ENCODE measurements at regions of chr10 and their contacts with region 1.

Region 1: DNA sequence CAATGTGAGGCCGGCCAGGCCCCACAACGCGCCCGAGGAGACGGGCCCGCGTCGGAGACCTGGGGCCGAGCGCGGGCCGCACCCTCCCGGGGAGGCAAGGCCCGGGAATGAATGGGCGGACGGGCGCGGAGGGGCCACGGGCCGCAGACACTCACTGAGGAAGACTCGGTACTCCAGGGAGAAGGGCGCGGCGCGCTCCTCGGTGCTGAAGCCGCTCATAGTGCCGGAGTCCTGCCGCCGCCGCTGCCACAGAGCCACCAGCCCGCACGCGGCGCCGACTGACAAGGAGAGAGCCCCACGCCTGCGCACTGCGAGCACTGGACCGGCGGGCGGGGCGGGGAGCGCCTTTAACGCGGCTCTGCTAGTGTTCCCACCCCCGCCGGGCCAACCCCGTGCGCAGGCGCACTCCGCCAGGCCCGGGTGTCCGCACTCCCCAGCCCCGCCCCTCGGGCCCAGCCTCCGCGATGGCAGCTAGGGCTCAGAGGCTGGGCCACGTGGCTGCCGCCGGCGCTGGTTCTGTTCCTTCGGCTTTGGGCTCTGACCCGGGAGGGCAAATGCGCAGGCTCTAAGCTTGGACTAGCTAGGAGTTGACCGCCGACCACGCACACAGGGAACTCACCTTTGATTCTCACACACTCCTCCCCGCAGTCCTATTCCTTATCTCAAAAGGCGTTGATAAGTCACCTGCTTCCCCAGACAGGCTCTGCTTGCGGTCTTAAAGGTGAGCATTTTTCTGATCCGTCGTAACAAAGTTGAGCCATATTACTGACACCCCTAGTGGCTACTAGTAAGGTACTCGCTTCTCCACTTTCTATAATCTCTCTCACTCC is at the start of gene PPA1:
- DNase-seq: peak; percentile 98 to 100 (median 99)
- ATAC-seq: peak; percentile 99
- H3K4me3 ChIP-seq: peak within 1 kb of the TSS; percentile 88
- H3K4me3 Mint-ChIP-seq: peak within 1 kb of the TSS; percentile 74 to 94 (median 87)
- H3K27ac ChIP-seq: peak within 1 kb of the TSS; percentile 84
- H3K27ac Mint-ChIP-seq: peak within 1 kb of the TSS; percentile 79 to 99 (median 92)
- H3K4me1 ChIP-seq: peaks cover 4 to 5% of the 10 kb centered on the region in 2 donors
- H3K4me1 Mint-ChIP-seq: peaks cover 9 to 47% (median 35%) of the 10 kb centered on the region in 7 donors
- H3K27me3 ChIP-seq: no peaks in the 10 kb centered on the region
- H3K27me3 Mint-ChIP-seq: no peaks in the 10 kb centered on the region
- total RNA-seq, gene PPA1: 51.9 to 175 (median 69.6) TPM

Region 2: DNA sequence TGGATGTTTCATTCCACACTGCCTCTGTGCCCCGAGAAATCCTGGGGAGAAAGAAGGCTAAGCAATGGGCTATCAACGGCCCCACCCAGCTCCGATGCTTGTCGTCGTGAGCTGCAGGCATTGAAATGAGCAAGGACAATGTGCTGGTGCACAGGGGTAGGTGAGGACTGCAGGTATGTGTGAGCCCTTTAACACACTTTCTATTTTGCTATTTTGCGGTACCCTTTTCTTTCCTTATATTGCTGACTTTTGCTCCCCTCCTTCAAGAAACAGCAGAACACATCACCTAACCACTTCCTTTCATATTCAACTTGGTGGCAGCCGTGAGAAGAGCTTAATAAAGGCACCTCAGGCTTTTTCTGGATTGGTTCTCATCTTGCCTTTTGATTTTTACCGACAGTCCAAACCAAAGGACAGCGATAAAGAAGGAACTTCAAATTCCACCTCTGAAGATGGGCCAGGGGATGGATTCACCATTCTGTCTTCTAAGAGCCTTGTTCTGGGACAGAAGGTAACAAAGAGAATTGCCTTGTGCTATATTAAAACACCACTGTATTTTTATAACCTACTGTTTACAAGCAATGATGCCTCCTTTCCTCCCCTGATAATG is 139.9 kb before region 1 on chr10:
- CTCF ChIA-PET with region 1: no interaction called
- POLR2A ChIA-PET with region 1: interaction called, 5 read pairs
- intact Hi-C with region 1: loop called in 1 of 2 experiments (anchors 2 kb)
- DNase-seq: peak in 7 of 9 donors; percentile 28 to 52 (median 42)
- ATAC-seq: peak; percentile 75
- H3K4me3 ChIP-seq: peak overlapping the region; percentile 73
- H3K4me3 Mint-ChIP-seq: peak overlapping the region; percentile 70 to 96 (median 89)
- H3K27ac ChIP-seq: peak overlapping the region; percentile 79
- H3K27ac Mint-ChIP-seq: peak overlapping the region; percentile 77 to 99 (median 93)
- H3K4me1 ChIP-seq: peaks cover 17 to 29% of the 10 kb centered on the region in 2 donors
- H3K4me1 Mint-ChIP-seq: peaks cover 18 to 64% (median 57%) of the 10 kb centered on the region in 7 donors
- H3K27me3 ChIP-seq: no peaks in the 10 kb centered on the region
- H3K27me3 Mint-ChIP-seq: no peaks in the 10 kb centered on the region

Region 3: DNA sequence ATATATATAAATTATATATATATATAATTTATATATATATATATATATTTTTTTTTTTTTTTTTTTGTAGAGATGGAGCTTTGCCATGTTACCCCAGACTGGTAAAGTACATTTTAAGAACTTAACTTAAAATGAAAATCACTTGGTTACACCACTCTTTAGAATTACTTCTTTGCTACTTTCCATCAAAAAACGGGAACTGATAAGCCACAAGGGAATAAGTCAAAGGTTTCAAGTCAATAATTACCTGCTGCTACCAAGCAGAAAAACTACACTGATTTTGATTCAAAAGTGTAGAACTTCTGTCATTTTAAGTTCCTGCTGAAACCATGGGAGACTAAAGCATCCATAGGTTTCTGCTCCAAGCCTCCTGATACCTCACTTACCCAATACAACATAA is 12.3 kb before region 1 on chr10:
- CTCF ChIA-PET with region 1: interaction called, 34 read pairs
- POLR2A ChIA-PET with region 1: interaction called, 6 read pairs
- intact Hi-C with region 1: loop called (anchors 1 kb)
- DNase-seq: no peak
- ATAC-seq: no peak
- H3K4me3 ChIP-seq: no peak overlapping the region
- H3K4me3 Mint-ChIP-seq: peak overlapping the region in 4 of 10 donors; percentile 8 to 74 (median 42)
- H3K27ac ChIP-seq: no peak overlapping the region
- H3K27ac Mint-ChIP-seq: peak overlapping the region in 6 of 9 donors; percentile 9 to 78 (median 31)
- H3K4me1 ChIP-seq: peaks cover 0 to 8% of the 10 kb centered on the region in 2 donors
- H3K4me1 Mint-ChIP-seq: peaks cover 9 to 23% (median 12%) of the 10 kb centered on the region in 7 donors
- H3K27me3 ChIP-seq: no peaks in the 10 kb centered on the region
- H3K27me3 Mint-ChIP-seq: no peaks in the 10 kb centered on the region

Region 4: GRCh38 chr10:70363971-70364771 is 130.8 kb after region 1 on chr10:
- CTCF ChIA-PET with region 1: interaction called, 13 read pairs
- POLR2A ChIA-PET with region 1: interaction called, 4 read pairs
- intact Hi-C with region 1: no loop called
- DNase-seq: peak; percentile 62 to 83 (median 77)
- ATAC-seq: peak; percentile 98
- H3K4me3 ChIP-seq: no peak overlapping the region
- H3K4me3 Mint-ChIP-seq: peak overlapping the region in 5 of 10 donors; percentile 23 to 71 (median 42)
- H3K27ac ChIP-seq: no peak overlapping the region
- H3K27ac Mint-ChIP-seq: peak overlapping the region in 4 of 9 donors; percentile 25 to 50 (median 36)
- H3K4me1 ChIP-seq: peaks cover 0 to 6% of the 10 kb centered on the region in 2 donors
- H3K4me1 Mint-ChIP-seq: peaks cover 7 to 12% (median 9%) of the 10 kb centered on the region in 7 donors
- H3K27me3 ChIP-seq: no peaks in the 10 kb centered on the region
- H3K27me3 Mint-ChIP-seq: peaks cover 0 to 3% (median 0%) of the 10 kb centered on the region in 5 donors

Region 5: GRCh38 chr10:70478191-70479164 is 245.2 kb after region 1 on chr10 and contains the start of gene PALD1:
- CTCF ChIA-PET with region 1: no interaction called
- POLR2A ChIA-PET with region 1: no interaction called
- intact Hi-C with region 1: loop called (anchors 1 to 5 kb)
- DNase-seq: peak in 5 of 9 donors; percentile 13 to 71 (median 24)
- ATAC-seq: no peak
- H3K4me3 ChIP-seq: peak within 1 kb of the TSS; percentile 56
- H3K4me3 Mint-ChIP-seq: peak within 1 kb of the TSS; percentile 78 to 90 (median 84)
- H3K27ac ChIP-seq: peak within 1 kb of the TSS; percentile 33
- H3K27ac Mint-ChIP-seq: peak within 1 kb of the TSS; percentile 56 to 93 (median 75)
- H3K4me1 ChIP-seq: peaks cover 29 to 51% of the 10 kb centered on the region in 2 donors
- H3K4me1 Mint-ChIP-seq: peaks cover 28 to 65% (median 56%) of the 10 kb centered on the region in 7 donors
- H3K27me3 ChIP-seq: peaks cover 0 to 4% of the 10 kb centered on the region in 2 donors
- H3K27me3 Mint-ChIP-seq: peaks cover 0 to 74% (median 0%) of the 10 kb centered on the region in 5 donors
- total RNA-seq, gene PALD1: 0.08 to 0.39 (median 0.19) TPM

Region 6: GRCh38 chr10:70887804-70888800 is 654.8 kb after region 1 on chr10 and contains the start of gene PCBD1:
- CTCF ChIA-PET with region 1: no interaction called
- POLR2A ChIA-PET with region 1: no interaction called
- intact Hi-C with region 1: loop called (anchors 5 kb)
- DNase-seq: peak; percentile 36 to 78 (median 63)
- ATAC-seq: peak; percentile 93
- H3K4me3 ChIP-seq: peak within 1 kb of the TSS; percentile 73
- H3K4me3 Mint-ChIP-seq: peak within 1 kb of the TSS; percentile 84 to 89 (median 88)
- H3K27ac ChIP-seq: peak within 1 kb of the TSS; percentile 74
- H3K27ac Mint-ChIP-seq: peak within 1 kb of the TSS; percentile 53 to 91 (median 78)
- H3K4me1 ChIP-seq: peaks cover 4 to 10% of the 10 kb centered on the region in 2 donors
- H3K4me1 Mint-ChIP-seq: peaks cover 0 to 25% (median 8%) of the 10 kb centered on the region in 7 donors
- H3K27me3 ChIP-seq: no peaks in the 10 kb centered on the region
- H3K27me3 Mint-ChIP-seq: no peaks in the 10 kb centered on the region
- total RNA-seq, gene PCBD1: 4.5 to 29.8 (median 8.3) TPM